Heart left ventricle (tissue), 16 donors: ENCODE measurements at regions of chr17 and their contacts with region 1.

Region 1: GRCh38 chr17:46212634-46213435 is 19.6 kb upstream of the KANSL1 start:
- DNase-seq: peak in 4 of 5 donors; percentile 48 to 72 (median 56)
- ATAC-seq: peak; percentile 45 to 78 (median 76)
- H3K4me3 ChIP-seq: no peak overlapping the region
- H3K27ac ChIP-seq: peak overlapping the region in 2 of 12 donors; percentile 16 to 57
- H3K4me1 ChIP-seq: peaks cover 0 to 27% (median 8%) of the 10 kb centered on the region in 12 donors
- H3K27me3 ChIP-seq: no peaks in the 10 kb centered on the region
- CTCF ChIP-seq: peak; percentile 58 to 92 (median 83)
- POLR2A ChIP-seq: no peak

Region 2: DNA sequence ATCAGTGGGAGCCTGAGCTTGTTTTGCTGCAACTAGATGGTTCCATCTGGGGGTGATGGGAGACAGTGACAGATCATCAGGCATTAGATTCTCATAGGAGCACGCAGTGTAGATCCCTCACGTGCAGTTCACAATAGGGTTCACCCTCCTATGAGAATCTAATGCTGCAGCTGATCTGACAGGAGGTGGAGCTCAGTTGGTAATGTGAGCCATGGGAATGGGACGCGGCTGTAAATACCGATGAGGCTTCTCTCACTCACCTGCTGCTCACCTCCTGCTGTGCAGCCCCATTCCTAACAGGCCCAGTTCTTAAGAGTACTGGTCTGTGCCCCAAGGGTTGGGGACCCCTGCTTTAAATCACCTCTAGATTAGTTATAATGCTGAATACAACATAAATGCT is 584.8 kb before region 1 on chr17:
- intact Hi-C with region 1: loop called in 1 of 10 experiments (anchors 5 kb)
- DNase-seq: no peak
- ATAC-seq: no peak
- H3K4me3 ChIP-seq: no peak overlapping the region
- H3K27ac ChIP-seq: no peak overlapping the region
- H3K4me1 ChIP-seq: no peaks in the 10 kb centered on the region
- H3K27me3 ChIP-seq: no peaks in the 10 kb centered on the region
- CTCF ChIP-seq: no peak
- POLR2A ChIP-seq: no peak

Region 3: DNA sequence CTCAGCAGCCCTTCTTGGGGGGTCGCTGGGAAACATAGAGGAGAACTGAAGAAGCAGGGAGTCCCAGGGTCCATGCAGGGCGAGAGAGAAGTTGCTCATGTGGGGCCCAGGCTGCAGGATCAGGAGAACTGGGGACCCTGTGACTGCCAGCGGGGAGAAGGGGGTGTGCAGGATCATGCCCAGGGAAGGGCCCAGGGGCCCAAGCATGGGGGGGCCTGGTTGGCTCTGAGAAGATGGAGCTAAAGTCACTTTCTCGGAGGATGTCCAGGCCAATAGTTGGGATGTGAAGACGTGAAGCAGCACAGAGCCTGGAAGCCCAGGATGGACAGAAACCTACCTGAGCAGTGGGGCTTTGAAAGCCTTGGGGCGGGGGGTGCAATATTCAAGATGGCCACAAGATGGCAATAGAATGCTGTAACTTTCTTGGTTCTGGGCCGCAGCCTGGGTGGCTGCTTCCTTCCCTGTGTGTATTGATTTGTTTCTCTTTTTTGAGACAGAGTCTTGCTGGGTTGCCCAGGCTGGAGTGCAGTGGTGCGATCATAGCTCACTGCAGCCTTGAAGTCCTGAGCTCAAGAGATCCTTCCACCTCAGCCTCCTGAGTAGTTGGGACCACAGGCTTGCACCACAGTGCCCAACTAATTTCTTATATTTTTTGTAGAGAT is 210.4 kb before region 1 on chr17:
- intact Hi-C with region 1: loop called (anchors 1 to 5 kb)
- DNase-seq: peak in 4 of 5 donors; percentile 54 to 65 (median 57)
- ATAC-seq: peak; percentile 60 to 85 (median 81)
- H3K4me3 ChIP-seq: no peak overlapping the region
- H3K27ac ChIP-seq: no peak overlapping the region
- H3K4me1 ChIP-seq: peaks cover 0 to 17% (median 0%) of the 10 kb centered on the region in 12 donors
- H3K27me3 ChIP-seq: no peaks in the 10 kb centered on the region
- CTCF ChIP-seq: peak; percentile 89 to 97 (median 94)
- POLR2A ChIP-seq: no peak

Region 4: DNA sequence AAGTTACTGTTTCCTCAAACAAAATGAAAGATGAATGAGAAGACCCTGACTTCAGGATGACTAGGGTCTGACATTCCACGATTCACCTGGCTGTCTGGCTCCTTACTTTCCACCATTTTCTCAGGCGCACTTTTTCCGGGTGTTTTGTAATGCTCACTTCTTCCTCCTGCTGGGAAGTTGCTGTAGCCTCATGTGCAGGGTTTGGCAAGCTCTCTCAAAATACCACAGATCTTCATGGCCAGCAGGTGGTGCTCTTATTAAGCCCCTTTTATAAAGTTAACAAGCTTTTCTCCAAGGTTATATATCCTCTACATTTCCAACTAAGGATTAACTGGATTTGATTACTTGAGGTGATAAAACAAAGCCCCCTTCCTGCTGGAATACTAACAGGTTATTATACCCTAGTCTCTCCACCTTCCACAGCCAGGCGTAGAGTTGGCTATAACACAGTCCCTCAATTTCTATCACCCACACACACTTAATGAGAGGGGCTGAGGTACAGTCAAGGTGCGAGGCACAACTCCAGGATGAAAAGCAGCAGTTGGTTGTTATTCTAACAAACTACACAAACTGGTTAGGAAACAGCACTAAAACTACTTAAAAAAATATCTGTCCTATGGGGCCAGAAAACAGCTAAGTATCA is 168.4 kb before region 1 on chr17:
- intact Hi-C with region 1: loop called in 9 of 10 experiments (anchors 1 to 5 kb)
- DNase-seq: peak in 4 of 5 donors; percentile 73 to 77 (median 75)
- ATAC-seq: peak; percentile 33 to 86 (median 82)
- H3K4me3 ChIP-seq: peak overlapping the region in 1 of 12 donors; percentile 8
- H3K27ac ChIP-seq: peak overlapping the region in 8 of 12 donors; percentile 3 to 58 (median 24)
- H3K4me1 ChIP-seq: peaks cover 0 to 41% (median 21%) of the 10 kb centered on the region in 12 donors
- H3K27me3 ChIP-seq: no peaks in the 10 kb centered on the region
- CTCF ChIP-seq: peak; percentile 75 to 95 (median 86)
- POLR2A ChIP-seq: no peak

Region 5: DNA sequence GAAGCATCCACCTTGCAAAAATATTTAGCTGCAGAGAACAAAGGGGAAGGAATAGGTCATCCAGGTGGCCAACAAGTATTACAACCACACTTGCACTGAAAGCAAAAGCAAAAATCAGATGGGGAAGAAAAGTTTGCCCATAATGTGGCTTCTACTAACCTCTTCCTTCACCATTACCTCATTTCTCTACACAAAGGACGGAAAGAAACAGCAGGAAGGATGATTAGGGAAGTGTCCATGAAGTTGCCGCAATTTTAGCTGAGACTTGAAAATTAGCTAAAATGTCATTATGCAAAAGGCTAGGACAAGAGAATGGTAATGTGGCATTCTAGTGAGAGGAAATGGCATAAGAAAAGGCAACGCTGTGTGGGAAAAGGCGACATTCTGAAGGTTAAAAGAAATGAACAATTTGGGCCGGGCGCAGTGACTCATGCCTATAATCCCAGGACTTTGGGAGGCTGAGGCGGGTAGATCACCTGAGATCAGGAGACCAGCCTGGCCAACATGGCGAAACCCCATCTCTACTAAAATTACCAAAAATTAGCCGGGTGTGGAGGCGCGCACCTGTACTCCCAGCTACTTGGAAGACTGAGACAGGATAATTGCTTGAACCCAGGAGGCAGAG is 33.3 kb before region 1 on chr17:
- intact Hi-C with region 1: no loop called
- DNase-seq: peak in 1 of 5 donors; percentile 13
- ATAC-seq: peak in 3 of 4 donors; percentile 20 to 62 (median 44)
- H3K4me3 ChIP-seq: no peak overlapping the region
- H3K27ac ChIP-seq: peak overlapping the region in 1 of 12 donors; percentile 48
- H3K4me1 ChIP-seq: peaks cover 0 to 93% (median 82%) of the 10 kb centered on the region in 12 donors
- H3K27me3 ChIP-seq: no peaks in the 10 kb centered on the region
- CTCF ChIP-seq: no peak
- POLR2A ChIP-seq: no peak

Region 6: DNA sequence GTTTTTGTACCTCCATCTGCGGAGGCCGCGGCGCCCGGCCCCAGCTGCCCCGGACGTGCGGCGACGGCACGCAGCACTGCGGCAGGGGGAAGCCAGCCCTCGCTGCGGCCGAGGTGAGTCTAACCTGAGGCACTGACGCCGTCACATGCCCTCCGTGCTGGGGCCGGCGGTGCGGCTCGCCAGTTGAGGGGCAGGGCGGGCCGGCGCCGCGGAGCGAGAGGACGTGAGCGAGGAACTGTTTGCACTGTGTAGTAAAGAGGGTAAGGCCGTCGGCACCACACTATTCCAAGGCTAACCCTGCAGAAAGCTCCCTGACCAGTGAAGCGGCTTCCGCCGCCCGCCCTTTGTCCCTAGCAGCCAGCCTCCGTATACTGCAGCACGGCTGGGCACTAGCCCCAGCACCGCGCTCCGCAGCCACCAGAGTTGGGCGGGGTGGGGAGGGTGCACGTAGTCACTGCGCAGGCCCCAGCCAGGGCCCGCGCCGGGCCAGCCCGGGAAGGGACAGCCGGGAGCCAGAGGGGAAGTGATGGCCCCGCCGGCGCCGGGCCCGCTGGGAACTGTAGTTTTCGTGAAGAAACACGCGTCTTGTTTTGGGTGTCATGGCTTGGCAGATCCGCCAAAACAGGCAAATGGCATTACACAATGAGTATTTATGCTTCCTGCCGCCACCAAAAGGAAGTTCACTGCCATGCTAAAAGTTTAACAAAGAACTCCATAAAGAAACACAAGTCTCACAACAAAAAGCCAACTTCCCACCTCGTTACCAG is 19.0 kb before region 1 on chr17:
- intact Hi-C with region 1: loop called in 2 of 10 experiments (anchors 2 kb)
- DNase-seq: peak; percentile 95 to 99 (median 98)
- ATAC-seq: peak; percentile 90 to 97 (median 95)
- H3K4me3 ChIP-seq: peak overlapping the region; percentile 70 to 100 (median 88)
- H3K27ac ChIP-seq: peak overlapping the region; percentile 98 to 100 (median 99)
- H3K4me1 ChIP-seq: peaks cover 0 to 49% (median 35%) of the 10 kb centered on the region in 12 donors
- H3K27me3 ChIP-seq: no peaks in the 10 kb centered on the region
- CTCF ChIP-seq: peak in 7 of 12 donors; percentile 7 to 54 (median 36)
- POLR2A ChIP-seq: peak in 1 of 2 donors; percentile 82

Region 7: GRCh38 chr17:47099987-47100711 is 887.3 kb after region 1 on chr17:
- intact Hi-C with region 1: loop called in 1 of 10 experiments (anchors 10 kb)
- DNase-seq: peak; percentile 92 to 96 (median 94)
- ATAC-seq: peak; percentile 99 to 100 (median 100)
- H3K4me3 ChIP-seq: peak overlapping the region; percentile 72 to 99 (median 93)
- H3K27ac ChIP-seq: peak overlapping the region; percentile 53 to 86 (median 74)
- H3K4me1 ChIP-seq: peaks cover 0 to 17% (median 9%) of the 10 kb centered on the region in 12 donors
- H3K27me3 ChIP-seq: no peaks in the 10 kb centered on the region
- CTCF ChIP-seq: peak in 2 of 12 donors; percentile 19 to 20
- POLR2A ChIP-seq: peak in 1 of 2 donors; percentile 75